ENCODE measurements at regions of chr10 and their contacts with region 1.

Region 1: GRCh38 chr10:17430647-17431355 is 23.6 kb downstream of the ST8SIA6 start:
- DNase-seq: peak; percentile 37 to 77 (median 57)
- ATAC-seq: no peak
- H3K4me3 Mint-ChIP-seq: peak overlapping the region in 6 of 10 donors; percentile 1 to 72 (median 38)
- H3K27ac Mint-ChIP-seq: peak overlapping the region in 8 of 10 donors; percentile 5 to 58 (median 40)
- H3K4me1 Mint-ChIP-seq: peaks cover 26 to 58% (median 51%) of the 10 kb centered on the region in 4 donors
- H3K27me3 Mint-ChIP-seq: peaks cover 0 to 11% (median 3%) of the 10 kb centered on the region in 5 donors

Region 2: GRCh38 chr10:17409170-17409733 is 21.5 kb before region 1 on chr10:
- POLR2A ChIA-PET with region 1: interaction called, 48 read pairs
- DNase-seq: peak in 3 of 10 donors; percentile 49 to 54 (median 53)
- ATAC-seq: peak; percentile 66 to 69
- H3K4me3 Mint-ChIP-seq: peak overlapping the region in 5 of 10 donors; percentile 4 to 47 (median 25)
- H3K27ac Mint-ChIP-seq: peak overlapping the region in 9 of 10 donors; percentile 15 to 87 (median 78)
- H3K4me1 Mint-ChIP-seq: peaks cover 18 to 28% (median 23%) of the 10 kb centered on the region in 4 donors
- H3K27me3 Mint-ChIP-seq: no peaks in the 10 kb centered on the region

Region 3: GRCh38 chr10:17418249-17418648 is 12.6 kb before region 1 on chr10:
- POLR2A ChIA-PET with region 1: interaction called, 43 read pairs
- DNase-seq: no peak
- ATAC-seq: no peak
- H3K4me3 Mint-ChIP-seq: no peak overlapping the region
- H3K27ac Mint-ChIP-seq: no peak overlapping the region
- H3K4me1 Mint-ChIP-seq: peaks cover 14 to 35% (median 22%) of the 10 kb centered on the region in 4 donors
- H3K27me3 Mint-ChIP-seq: peaks cover 0 to 2% (median 0%) of the 10 kb centered on the region in 5 donors

Region 4: DNA sequence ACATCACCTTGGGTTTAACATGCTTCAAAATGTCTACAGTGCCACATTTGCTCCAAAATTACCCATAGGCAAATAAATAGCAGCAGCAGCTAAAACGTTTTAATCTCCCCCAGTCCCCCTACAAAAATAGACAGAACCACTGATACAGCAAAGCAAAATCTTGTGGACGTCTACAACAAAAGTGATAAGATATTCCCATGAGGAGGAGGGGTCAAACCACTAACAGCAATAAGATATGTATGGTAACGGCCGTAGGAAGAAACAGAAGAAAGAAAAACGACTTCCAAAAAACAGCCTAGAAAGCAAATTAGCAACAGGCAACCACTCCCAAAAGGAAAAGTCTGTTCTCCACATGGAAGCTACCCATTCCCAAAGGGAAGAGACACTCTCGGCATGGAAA is 58.0 kb after region 1 on chr10:
- POLR2A ChIA-PET with region 1: no interaction called
- DNase-seq: no peak
- ATAC-seq: no peak
- H3K4me3 Mint-ChIP-seq: no peak overlapping the region
- H3K27ac Mint-ChIP-seq: no peak overlapping the region
- H3K4me1 Mint-ChIP-seq: no peaks in the 10 kb centered on the region
- H3K27me3 Mint-ChIP-seq: peaks cover 0 to 8% (median 3%) of the 10 kb centered on the region in 5 donors